ENCODE measurements at regions of chr1 and their contacts with region 1.

Region 1: GRCh38 chr1:45303582-45304310 is 22.9 kb upstream of the HPDL start:
- H3K4me3 Mint-ChIP-seq: peak overlapping the region; percentile 84
- H3K27ac Mint-ChIP-seq: peak overlapping the region; percentile 99
- H3K4me1 Mint-ChIP-seq: peaks cover 10% of the 10 kb centered on the region
- H3K27me3 Mint-ChIP-seq: no peaks in the 10 kb centered on the region

Region 2: GRCh38 chr1:44784094-44785028 is 519.4 kb before region 1 on chr1:
- intact Hi-C with region 1: loop called (anchors 5 kb)
- H3K4me3 Mint-ChIP-seq: peak overlapping the region; percentile 24
- H3K27ac Mint-ChIP-seq: peak overlapping the region; percentile 37
- H3K4me1 Mint-ChIP-seq: peaks cover 28% of the 10 kb centered on the region
- H3K27me3 Mint-ChIP-seq: peaks cover 23% of the 10 kb centered on the region

Region 3: DNA sequence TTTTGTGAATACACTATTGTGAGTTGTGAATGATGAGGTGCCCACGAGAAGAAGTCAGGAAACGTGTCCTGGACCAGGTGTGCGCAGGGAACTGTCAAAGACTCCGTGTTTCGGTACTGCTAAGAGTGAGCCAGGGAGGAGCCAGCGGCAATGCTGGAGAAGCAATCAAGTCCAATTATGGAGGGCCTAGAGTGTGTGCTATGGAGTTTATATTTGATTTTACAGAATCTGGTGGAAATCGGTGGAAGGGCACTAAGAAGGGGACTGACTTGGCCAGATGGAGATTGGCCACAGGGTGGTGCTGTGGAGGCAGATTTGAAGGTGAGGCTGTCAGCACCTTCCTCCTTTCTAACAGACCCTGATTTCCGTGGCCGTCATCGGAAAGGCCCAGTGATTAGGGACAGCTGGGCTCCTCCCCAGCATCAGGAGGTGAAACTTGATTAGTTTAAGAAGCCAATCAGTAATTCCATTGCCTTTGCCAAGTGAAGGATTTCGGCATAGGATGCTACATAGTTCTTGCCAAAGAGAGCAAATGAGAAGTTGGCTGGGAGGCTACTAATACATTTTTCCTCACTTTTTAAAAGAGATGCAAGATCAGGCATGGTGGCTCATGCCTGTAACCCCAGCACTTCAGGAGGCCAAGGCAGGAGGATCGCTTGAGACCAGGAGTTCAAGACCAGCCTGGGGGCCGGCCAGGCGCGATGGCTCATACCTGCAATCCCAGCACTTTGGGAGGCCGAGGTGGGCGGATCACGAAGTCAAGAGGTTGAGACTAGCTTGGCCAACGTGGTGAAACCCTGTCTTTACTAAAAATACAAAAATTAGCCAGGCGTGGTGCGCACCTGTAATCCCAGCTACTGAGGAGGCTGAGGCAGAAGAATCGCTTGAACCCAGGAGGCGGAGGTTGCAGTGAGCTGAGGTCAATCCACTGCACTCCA is 467.7 kb before region 1 on chr1:
- intact Hi-C with region 1: loop called (anchors 5 kb)
- H3K4me3 Mint-ChIP-seq: no peak overlapping the region
- H3K27ac Mint-ChIP-seq: no peak overlapping the region
- H3K4me1 Mint-ChIP-seq: peaks cover 49% of the 10 kb centered on the region
- H3K27me3 Mint-ChIP-seq: peaks cover 4% of the 10 kb centered on the region

Region 4: DNA sequence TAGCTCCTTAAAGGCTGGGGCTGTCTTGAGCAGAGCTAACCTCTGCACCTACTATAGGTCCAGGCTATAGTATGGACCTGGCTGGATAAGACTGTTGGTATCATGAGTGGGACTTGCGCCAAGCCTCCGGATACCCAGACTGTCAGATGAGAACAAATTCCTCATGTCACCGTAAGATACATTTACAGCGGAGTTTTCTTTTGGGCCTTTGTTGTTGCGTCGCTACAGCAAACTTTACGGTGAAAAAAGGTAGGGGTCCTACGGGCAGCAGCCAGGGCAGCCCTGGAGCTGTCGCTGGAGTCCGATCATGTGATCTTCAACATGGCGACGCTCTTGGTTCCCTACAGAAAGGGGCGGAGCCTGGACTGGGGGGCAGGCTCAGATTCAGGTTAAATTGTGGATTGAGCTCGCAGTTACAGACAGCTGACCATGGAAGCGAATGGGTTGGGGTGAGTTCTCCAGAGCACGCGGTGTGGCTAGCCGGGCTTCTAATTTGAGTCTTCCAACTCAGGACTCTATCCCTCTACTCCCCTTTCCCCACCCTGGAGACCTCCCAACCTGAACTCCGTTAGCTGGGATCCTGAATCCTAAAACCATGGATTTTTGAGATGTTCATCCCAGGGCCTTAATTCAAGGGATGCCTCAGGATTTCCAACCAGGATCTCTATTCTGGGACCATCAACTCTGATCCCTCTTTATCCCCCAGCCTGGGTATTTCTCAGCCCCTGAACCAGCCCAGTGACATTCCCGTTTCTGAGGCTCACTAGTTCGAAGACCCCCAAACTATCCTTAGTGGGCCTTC is 291.7 kb before region 1 on chr1 and contains the start of gene UROD:
- intact Hi-C with region 1: loop called (anchors 1 kb)
- H3K4me3 Mint-ChIP-seq: peak within 1 kb of the TSS; percentile 88
- H3K27ac Mint-ChIP-seq: peak within 1 kb of the TSS; percentile 86
- H3K4me1 Mint-ChIP-seq: peaks cover 64% of the 10 kb centered on the region
- H3K27me3 Mint-ChIP-seq: no peaks in the 10 kb centered on the region

Region 5: DNA sequence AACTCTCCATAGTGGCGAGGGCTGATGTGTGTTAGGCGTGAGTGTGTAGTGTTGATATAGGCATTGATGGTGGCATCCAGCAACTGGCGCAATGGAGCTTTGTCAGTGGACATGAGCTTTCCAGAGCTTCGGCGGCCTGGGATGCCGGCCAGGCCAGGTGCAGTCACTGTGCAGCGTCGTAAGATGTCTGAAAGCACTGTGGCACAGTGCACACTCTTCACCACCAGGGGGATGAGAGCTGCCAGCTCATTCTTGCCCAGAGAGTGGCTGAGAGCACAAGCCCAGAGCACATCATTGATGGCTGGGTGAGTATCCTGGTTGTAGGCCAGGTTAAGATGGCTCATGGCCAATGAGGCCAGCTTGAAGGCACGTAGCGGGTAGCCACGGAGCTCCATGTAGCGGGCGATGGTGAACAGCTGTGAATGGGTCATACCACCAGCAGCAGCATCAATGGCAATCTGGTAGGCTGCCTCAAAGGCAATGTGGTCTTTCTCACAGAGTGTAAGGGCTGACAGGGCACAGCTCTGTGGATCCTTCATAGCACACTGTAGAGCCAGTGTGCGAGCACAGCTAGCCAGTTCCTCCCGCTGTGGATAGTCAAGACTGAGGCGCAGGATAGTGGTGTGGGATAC is 285.0 kb before region 1 on chr1:
- intact Hi-C with region 1: loop called (anchors 1 kb)
- H3K4me3 Mint-ChIP-seq: no peak overlapping the region
- H3K27ac Mint-ChIP-seq: no peak overlapping the region
- H3K4me1 Mint-ChIP-seq: peaks cover 23% of the 10 kb centered on the region
- H3K27me3 Mint-ChIP-seq: no peaks in the 10 kb centered on the region

Region 6: DNA sequence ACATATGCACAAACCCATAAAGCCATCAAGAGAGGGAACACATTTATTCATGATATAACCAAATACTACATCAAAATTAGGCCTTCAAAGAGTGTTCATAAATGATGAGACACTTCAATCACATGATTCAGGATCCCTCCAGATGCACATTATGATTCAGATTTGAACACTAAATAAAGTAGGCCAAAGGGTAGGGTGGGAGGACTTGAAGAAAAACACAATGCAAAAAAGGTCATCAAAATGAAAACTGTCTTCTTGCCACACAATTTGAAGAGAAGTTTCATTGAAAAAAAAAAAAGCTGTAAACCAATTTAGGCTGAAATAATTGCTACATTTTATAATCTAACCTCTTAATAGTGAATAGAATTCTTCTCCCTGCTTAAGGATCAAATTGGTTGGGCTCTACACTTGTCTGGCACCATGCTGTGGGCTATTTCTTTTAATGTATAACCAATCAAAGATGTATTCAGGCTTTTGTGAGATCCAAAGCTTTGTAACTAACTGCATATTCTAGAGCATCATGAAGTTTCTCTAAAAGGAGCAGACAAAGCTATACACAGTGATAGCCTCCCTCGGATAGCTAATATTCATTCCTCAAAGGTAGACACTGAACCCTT is 155.4 kb before region 1 on chr1:
- intact Hi-C with region 1: no loop called
- H3K4me3 Mint-ChIP-seq: no peak overlapping the region
- H3K27ac Mint-ChIP-seq: no peak overlapping the region
- H3K4me1 Mint-ChIP-seq: peaks cover 5% of the 10 kb centered on the region
- H3K27me3 Mint-ChIP-seq: peaks cover 4% of the 10 kb centered on the region

Region 7: DNA sequence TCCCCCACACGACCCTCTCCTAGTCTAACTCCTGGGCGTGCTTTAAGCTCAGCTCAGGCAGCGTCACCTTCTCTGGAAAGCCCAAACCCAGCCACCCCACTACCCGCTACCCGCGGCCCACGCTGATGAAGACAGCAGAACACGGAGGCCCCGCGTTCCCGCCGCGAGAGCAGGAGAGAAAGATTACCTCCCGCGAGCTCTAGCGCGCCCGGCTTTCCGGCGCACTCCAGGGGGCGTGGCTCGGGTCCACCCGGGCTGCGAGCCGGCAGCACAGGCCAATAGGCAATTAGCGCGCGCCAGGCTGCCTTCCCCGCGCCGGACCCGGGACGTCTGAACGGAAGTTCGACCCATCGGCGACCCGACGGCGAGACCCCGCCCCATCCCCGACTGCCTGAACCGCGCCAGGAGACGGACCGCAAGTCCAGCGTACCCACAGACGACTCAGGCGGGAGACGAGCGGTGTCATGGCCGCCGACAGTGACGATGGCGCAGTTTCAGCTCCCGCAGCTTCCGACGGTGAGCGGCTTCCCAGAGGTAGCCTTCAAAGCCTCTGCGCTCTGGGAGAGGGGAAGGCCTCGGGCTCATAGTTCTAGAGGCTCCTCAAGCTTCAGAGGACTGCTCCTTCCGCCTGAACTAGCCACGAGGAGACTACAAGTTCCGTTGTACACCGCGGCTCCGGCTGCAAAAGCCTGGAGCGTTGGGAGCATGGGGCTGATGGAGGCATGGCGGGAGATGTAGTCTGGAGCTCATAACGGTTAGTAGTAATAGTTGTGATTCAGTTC is 36.2 kb after region 1 on chr1 and contains the starts of genes MUTYH and TOE1:
- intact Hi-C with region 1: loop called (anchors 1 kb)
- H3K4me3 Mint-ChIP-seq: peak within 1 kb of the TSS; percentile 89
- H3K27ac Mint-ChIP-seq: peak within 1 kb of the TSS; percentile 95
- H3K4me1 Mint-ChIP-seq: peaks cover 43% of the 10 kb centered on the region
- H3K27me3 Mint-ChIP-seq: no peaks in the 10 kb centered on the region

Region 8: DNA sequence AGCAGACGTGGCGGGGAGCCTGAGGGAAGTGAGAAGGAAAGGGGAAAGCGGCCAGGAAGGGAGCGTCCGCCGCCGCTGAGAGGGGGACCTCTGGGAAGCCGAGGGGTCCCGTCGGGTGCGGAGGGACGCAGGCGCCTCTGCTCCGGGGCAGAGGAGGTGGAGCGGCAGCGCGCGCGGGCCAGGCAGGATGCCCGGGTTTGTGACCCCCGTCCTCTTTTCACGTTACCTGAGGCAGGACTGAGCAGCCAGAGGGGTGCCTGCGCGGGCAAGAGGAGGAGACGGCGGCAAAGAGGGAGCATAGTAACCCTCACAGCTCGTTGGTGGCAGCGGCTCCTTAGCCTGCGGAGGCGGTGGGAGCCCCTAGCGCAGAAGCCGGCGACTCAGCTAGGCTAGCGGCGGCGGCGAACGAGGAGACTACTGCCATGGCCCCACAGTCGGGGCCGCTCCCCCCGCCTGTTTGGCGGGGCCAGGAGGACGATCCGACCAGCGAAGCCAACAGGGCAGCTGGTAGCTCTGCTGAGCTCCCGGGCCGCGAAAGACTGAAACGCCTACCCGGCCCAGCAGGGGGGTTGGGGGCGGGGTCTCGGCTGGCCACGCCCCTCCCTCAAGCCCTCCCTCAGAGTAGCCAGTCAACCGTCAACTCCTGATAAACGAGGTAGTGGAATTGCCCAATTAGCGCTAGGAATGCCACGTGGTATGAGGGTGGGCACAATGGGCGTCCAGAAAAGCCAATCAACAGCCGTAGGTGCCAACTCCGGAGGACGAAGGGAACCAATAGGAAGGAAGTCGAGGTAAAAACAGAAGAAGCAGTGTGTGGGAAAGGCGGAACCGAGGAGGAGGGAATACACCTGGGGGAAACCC is 187.1 kb after region 1 on chr1 and contains the start of gene TESK2:
- intact Hi-C with region 1: loop called (anchors 5 kb)
- H3K4me3 Mint-ChIP-seq: no peak within 1 kb of the TSS
- H3K27ac Mint-ChIP-seq: no peak within 1 kb of the TSS
- H3K4me1 Mint-ChIP-seq: peaks cover 5% of the 10 kb centered on the region
- H3K27me3 Mint-ChIP-seq: peaks cover 5% of the 10 kb centered on the region